HCT116 (cell line): ENCODE measurements at regions of chr4 and their contacts with region 1.

Region 1: DNA sequence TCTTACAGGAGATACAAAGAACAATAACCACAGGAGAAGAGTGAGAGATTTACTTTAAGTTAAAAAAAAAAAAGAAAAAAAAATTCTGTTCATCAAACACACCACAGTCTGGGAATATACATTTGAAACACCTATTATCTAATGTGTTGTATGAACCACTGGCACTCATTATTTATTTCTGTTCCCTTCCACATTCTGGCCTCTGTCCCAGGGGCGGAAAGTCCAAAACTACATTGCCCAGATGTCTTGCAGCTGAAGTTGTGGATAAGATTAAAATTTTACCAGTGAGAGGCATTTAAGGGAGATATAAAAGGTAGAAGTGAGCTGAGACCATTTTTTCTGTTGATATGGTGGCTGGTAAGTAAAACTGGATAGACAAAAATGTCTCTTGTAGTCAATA is 56.2 kb downstream of the SCLT1 start:
- DNase-seq: no peak
- ATAC-seq: no peak
- H3K4me3 ChIP-seq: no peak overlapping the region
- H3K27ac ChIP-seq: no peak overlapping the region
- H3K4me1 ChIP-seq: no peaks in the 10 kb centered on the region
- H3K27me3 ChIP-seq: no peaks in the 10 kb centered on the region
- CTCF ChIP-seq: no peak
- POLR2A ChIP-seq: no peak
- RAD21 ChIP-seq: no peak

Region 2: DNA sequence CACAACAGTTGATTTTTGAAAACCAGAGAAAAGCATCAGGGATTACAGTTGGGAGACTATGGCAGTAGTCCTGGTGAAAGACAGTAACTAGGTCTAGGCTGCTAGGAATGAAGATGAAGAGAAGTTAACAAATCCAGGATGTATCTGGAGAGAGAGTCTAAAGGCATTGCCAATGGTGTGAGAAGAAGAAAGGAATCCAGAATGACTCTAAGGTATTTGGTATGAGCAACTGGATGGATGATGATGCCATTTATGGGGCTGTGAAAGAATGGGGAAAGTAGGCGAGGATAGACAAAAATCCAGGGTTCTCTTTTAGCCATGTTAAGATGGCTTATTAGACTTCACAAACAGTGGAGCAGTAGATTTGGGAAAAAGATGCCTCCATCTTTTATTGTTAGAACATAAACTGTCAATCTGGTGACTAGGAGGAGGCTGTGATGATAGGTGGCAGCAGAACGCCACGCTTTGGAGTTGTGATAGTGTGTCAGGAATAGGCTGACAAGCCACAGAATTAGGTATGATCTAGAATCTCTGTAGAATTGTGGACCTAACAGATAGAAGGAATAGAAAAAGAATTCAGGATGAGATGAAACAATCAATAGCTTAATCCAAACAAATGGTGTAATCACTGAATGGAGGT is 254.9 kb before region 1 on chr4:
- CTCF ChIA-PET with region 1: no interaction called
- POLR2A ChIA-PET with region 1: no interaction called
- RAD21 ChIA-PET with region 1: no interaction called
- intact Hi-C with region 1: no loop called
- DNase-seq: peak; percentile 18
- ATAC-seq: peak; percentile 87
- H3K4me3 ChIP-seq: no peak overlapping the region
- H3K27ac ChIP-seq: no peak overlapping the region
- H3K4me1 ChIP-seq: no peaks in the 10 kb centered on the region
- H3K27me3 ChIP-seq: no peaks in the 10 kb centered on the region
- CTCF ChIP-seq: peak; percentile 19 to 46 (median 44); a peak in 4 of 6 replicates
- POLR2A ChIP-seq: no peak
- RAD21 ChIP-seq: peak; percentile 73

Region 3: DNA sequence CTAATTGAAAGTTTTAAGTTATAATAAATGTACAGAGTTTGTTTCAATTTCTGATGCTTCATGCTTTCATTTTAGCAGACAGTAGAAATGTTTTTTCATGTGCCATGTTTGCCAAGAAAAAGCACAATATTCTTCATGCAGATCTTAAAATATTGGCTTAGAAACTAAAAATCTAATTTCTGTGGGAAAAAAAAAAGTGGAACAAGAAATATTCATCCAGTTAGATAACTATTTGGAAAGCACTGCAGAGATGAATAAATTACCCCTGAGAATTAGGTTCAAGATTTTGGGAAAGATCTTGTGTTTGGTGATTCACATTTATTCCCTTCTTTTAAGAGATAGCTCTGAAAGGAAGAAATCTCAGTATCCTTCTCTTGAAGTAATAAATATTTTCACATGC is 971.4 kb after region 1 on chr4:
- CTCF ChIA-PET with region 1: no interaction called
- POLR2A ChIA-PET with region 1: no interaction called
- RAD21 ChIA-PET with region 1: no interaction called
- intact Hi-C with region 1: loop called (anchors 5 kb)
- DNase-seq: no peak
- ATAC-seq: no peak
- H3K4me3 ChIP-seq: no peak overlapping the region
- H3K27ac ChIP-seq: no peak overlapping the region
- H3K4me1 ChIP-seq: no peaks in the 10 kb centered on the region
- H3K27me3 ChIP-seq: no peaks in the 10 kb centered on the region
- CTCF ChIP-seq: no peak
- POLR2A ChIP-seq: no peak
- RAD21 ChIP-seq: no peak